ENCODE measurements at regions of chrX and their contacts with region 1.

Region 1: DNA sequence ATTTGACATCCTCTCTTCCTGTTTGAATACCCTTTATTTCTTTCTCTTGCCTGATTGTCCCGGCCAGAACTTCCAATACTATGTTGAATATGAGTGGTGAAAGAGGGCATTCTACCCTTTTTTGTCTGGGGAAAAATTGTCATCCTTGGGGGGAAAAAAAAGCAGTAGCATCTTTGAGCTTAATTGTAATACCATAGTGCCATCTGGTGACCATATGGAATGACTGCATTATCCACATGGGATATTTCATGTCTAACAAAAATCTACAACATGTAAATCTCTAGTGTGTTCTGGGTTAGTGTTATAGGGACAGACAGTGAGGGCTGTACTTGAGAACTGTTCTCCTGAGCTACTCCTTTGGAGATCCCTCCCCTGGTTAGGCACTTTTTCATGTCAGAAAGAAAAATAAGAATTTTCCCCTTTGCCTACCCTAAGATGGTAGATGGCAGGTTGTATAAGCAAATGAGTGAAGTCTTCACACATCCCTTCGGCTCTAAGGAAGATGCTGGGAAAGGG is 26.0 kb downstream of the CAPN6 start:
- DNase-seq: no peak
- ATAC-seq: no peak
- H3K4me3 ChIP-seq: no peak overlapping the region
- H3K27ac ChIP-seq: no peak overlapping the region
- H3K4me1 ChIP-seq: no peaks in the 10 kb centered on the region
- H3K27me3 ChIP-seq: no peaks in the 10 kb centered on the region; the same call in 1 of the 2 replicates
- CTCF ChIP-seq: peak; percentile 60; the same call in 1 of the 2 replicates

Region 2: GRCh38 chrX:109843963-109844751 is 1400.1 kb before region 1 on chrX:
- CTCF ChIA-PET with region 1: no interaction called
- POLR2A ChIA-PET with region 1: no interaction called
- in situ Hi-C with region 1: no loop called
- intact Hi-C with region 1: no loop called
- DNase-seq: no peak
- ATAC-seq: no peak
- H3K4me3 ChIP-seq: no peak overlapping the region
- H3K27ac ChIP-seq: no peak overlapping the region
- H3K4me1 ChIP-seq: no peaks in the 10 kb centered on the region; the same call in 1 of the 2 replicates
- H3K27me3 ChIP-seq: no peaks in the 10 kb centered on the region
- CTCF ChIP-seq: no peak

Region 3: GRCh38 chrX:110442640-110443039 is 801.7 kb before region 1 on chrX:
- CTCF ChIA-PET with region 1: no interaction called
- POLR2A ChIA-PET with region 1: no interaction called
- in situ Hi-C with region 1: no loop called
- intact Hi-C with region 1: loop called (anchors 10 kb)
- DNase-seq: no peak
- ATAC-seq: peak; percentile 69; the same call in 1 of the 2 replicates
- H3K4me3 ChIP-seq: no peak overlapping the region
- H3K27ac ChIP-seq: no peak overlapping the region
- H3K4me1 ChIP-seq: no peaks in the 10 kb centered on the region
- H3K27me3 ChIP-seq: peaks cover 30% of the 10 kb centered on the region
- CTCF ChIP-seq: peak; percentile 35

Region 4: DNA sequence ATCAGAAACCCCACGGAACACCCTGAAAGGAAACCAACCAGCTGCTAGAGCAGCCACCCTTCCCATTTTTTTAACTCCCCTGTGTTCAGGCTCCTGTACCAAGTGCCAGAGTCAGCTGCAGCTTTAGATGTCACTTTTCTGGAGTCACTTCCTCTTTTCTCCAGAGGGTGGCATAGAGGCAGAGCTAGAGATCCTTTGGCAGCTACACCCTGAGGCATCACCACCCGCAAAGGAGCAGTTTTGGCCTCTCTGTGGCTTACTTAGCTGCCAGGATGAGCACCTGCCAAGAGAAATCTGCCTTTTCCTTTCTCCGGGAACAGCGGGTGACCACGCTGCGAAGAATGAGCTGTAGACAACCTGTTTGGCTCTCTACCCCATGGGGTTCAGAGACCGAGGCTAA is 390.7 kb before region 1 on chrX:
- CTCF ChIA-PET with region 1: interaction called, 8 read pairs
- POLR2A ChIA-PET with region 1: no interaction called
- in situ Hi-C with region 1: no loop called
- intact Hi-C with region 1: loop called (anchors 5 kb)
- DNase-seq: no peak
- ATAC-seq: 0 out of 2 replicates have a peak, but pooled peaks have one; percentile 58
- H3K4me3 ChIP-seq: no peak overlapping the region
- H3K27ac ChIP-seq: no peak overlapping the region
- H3K4me1 ChIP-seq: no peaks in the 10 kb centered on the region
- H3K27me3 ChIP-seq: no peaks in the 10 kb centered on the region
- CTCF ChIP-seq: peak; percentile 34; the same call in 1 of the 2 replicates

Region 5: DNA sequence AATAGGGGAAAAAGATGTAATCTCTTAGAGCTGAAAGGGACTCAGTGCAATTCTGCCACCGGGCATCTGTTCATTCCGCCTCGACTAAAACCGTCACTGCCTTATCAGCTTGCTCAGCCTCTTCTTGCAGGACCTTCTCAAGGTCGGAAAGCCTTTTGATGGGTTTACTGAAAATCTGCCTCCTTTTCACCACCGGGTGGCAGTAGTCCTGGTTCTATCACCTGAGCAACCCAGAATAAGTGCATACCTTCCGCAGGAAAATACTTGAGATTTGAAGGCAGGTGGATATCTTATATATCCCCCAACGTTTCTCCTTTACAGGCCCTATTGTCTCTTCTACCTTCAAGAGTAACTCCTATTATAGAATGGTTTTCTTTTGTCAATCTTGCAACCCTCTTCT is 251.7 kb before region 1 on chrX:
- CTCF ChIA-PET with region 1: no interaction called
- POLR2A ChIA-PET with region 1: no interaction called
- in situ Hi-C with region 1: no loop called
- intact Hi-C with region 1: loop called (anchors 10 kb)
- DNase-seq: peak; percentile 13
- ATAC-seq: no peak
- H3K4me3 ChIP-seq: no peak overlapping the region
- H3K27ac ChIP-seq: no peak overlapping the region
- H3K4me1 ChIP-seq: no peaks in the 10 kb centered on the region
- H3K27me3 ChIP-seq: no peaks in the 10 kb centered on the region
- CTCF ChIP-seq: peak; percentile 61

Region 6: GRCh38 chrX:111006116-111006515 is 238.2 kb before region 1 on chrX:
- CTCF ChIA-PET with region 1: no interaction called
- POLR2A ChIA-PET with region 1: no interaction called
- in situ Hi-C with region 1: no loop called
- intact Hi-C with region 1: no loop called
- DNase-seq: no peak
- ATAC-seq: no peak
- H3K4me3 ChIP-seq: no peak overlapping the region
- H3K27ac ChIP-seq: no peak overlapping the region
- H3K4me1 ChIP-seq: no peaks in the 10 kb centered on the region
- H3K27me3 ChIP-seq: no peaks in the 10 kb centered on the region
- CTCF ChIP-seq: no peak

Region 7: GRCh38 chrX:111123125-111123524 is 121.2 kb before region 1 on chrX:
- CTCF ChIA-PET with region 1: no interaction called
- POLR2A ChIA-PET with region 1: no interaction called
- in situ Hi-C with region 1: no loop called
- intact Hi-C with region 1: no loop called
- DNase-seq: no peak
- ATAC-seq: no peak
- H3K4me3 ChIP-seq: peak overlapping the region in 1 of 2 experiments; percentile 9; a peak in 1 of 4 replicates
- H3K27ac ChIP-seq: no peak overlapping the region
- H3K4me1 ChIP-seq: no peaks in the 10 kb centered on the region
- H3K27me3 ChIP-seq: no peaks in the 10 kb centered on the region
- CTCF ChIP-seq: no peak

Region 8: DNA sequence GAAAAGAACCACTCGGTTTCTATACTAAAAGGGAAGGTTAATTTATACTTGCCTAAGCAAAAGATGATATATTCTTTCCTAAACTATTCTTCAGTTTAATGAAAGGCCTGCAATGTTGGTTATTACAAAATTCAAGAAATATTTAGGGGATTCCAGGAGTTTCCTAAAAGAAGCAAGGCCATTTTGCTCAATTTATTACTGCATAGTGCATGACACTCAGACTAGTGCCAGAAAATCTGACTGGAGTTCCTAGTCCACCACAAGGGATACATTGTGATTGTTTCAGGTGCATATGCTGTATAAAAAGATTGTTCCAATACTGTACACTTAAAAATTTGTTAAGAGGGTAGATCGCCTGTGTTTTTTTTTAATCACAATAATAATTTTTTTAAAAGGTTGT is 52.7 kb before region 1 on chrX:
- CTCF ChIA-PET with region 1: interaction called, 11 read pairs
- POLR2A ChIA-PET with region 1: no interaction called
- in situ Hi-C with region 1: no loop called
- intact Hi-C with region 1: no loop called
- DNase-seq: no peak
- ATAC-seq: no peak
- H3K4me3 ChIP-seq: no peak overlapping the region
- H3K27ac ChIP-seq: no peak overlapping the region
- H3K4me1 ChIP-seq: no peaks in the 10 kb centered on the region
- H3K27me3 ChIP-seq: no peaks in the 10 kb centered on the region
- CTCF ChIP-seq: no peak

Region 9: DNA sequence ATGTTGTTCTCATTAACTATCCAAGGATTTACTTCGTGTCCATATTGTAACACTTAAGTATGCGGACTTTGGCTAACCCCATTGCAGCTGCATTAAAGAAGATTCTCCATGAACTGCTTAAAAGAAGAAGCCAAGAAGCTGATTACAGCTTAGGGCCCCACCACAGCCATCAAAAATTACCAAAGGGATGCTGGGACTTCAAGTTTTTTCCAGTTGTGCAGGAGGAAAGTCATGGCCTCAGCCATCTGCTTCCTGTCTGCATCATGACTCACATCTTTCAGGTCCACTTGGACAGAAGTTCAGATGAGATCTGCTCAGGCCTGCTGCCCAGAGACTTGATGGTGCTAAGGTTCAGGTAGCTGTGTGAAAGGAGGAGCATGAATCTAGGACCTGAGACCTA is 64.8 kb after region 1 on chrX:
- CTCF ChIA-PET with region 1: no interaction called
- POLR2A ChIA-PET with region 1: no interaction called
- in situ Hi-C with region 1: no loop called
- intact Hi-C with region 1: no loop called
- DNase-seq: no peak
- ATAC-seq: no peak
- H3K4me3 ChIP-seq: no peak overlapping the region
- H3K27ac ChIP-seq: no peak overlapping the region
- H3K4me1 ChIP-seq: no peaks in the 10 kb centered on the region
- H3K27me3 ChIP-seq: no peaks in the 10 kb centered on the region
- CTCF ChIP-seq: no peak

Measured in Panc1 (cell line).